ENCODE measurements at regions of chr22 and their contacts with region 1.

Region 1: GRCh38 chr22:39292561-39293098 is 26.8 kb downstream of the RPL3 start:
- DNase-seq: peak; percentile 96 to 98
- H3K4me3 ChIP-seq: peak overlapping the region in 1 of 3 donors; percentile 32
- H3K27ac ChIP-seq: peak overlapping the region; percentile 95 to 96
- H3K4me1 ChIP-seq: peaks cover 20 to 37% of the 10 kb centered on the region in 2 donors
- H3K27me3 ChIP-seq: no peaks in the 10 kb centered on the region
- CTCF ChIP-seq: peak in 1 of 3 donors; percentile 7
- POLR2A ChIP-seq: peak; percentile 34

Region 2: DNA sequence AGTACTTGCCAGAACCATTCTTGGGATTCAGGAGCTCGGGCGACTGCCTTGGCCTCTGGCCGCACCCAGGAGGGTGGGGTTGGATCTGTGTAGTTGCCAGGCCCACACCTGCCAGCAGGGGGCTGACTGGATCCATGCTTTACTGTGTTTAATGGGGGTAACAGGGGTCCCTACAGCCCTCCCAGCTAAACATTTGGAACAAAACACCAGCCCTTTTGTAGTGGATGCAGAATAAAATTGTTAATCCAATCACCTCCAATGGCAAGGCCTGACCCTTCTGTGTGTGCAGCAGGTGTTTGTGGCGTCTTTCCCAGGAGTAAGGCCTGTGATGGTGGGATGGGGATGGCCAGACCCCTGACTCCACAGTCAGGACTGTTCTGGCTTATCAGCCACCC is 559.3 kb before region 1 on chr22:
- intact Hi-C with region 1: loop called (anchors 5 kb)
- DNase-seq: no peak
- H3K4me3 ChIP-seq: no peak overlapping the region
- H3K27ac ChIP-seq: peak overlapping the region; percentile 81 to 87
- H3K4me1 ChIP-seq: peaks cover 12 to 20% of the 10 kb centered on the region in 2 donors
- H3K27me3 ChIP-seq: no peaks in the 10 kb centered on the region
- CTCF ChIP-seq: peak; percentile 53 to 68 (median 55)
- POLR2A ChIP-seq: no peak

Region 3: DNA sequence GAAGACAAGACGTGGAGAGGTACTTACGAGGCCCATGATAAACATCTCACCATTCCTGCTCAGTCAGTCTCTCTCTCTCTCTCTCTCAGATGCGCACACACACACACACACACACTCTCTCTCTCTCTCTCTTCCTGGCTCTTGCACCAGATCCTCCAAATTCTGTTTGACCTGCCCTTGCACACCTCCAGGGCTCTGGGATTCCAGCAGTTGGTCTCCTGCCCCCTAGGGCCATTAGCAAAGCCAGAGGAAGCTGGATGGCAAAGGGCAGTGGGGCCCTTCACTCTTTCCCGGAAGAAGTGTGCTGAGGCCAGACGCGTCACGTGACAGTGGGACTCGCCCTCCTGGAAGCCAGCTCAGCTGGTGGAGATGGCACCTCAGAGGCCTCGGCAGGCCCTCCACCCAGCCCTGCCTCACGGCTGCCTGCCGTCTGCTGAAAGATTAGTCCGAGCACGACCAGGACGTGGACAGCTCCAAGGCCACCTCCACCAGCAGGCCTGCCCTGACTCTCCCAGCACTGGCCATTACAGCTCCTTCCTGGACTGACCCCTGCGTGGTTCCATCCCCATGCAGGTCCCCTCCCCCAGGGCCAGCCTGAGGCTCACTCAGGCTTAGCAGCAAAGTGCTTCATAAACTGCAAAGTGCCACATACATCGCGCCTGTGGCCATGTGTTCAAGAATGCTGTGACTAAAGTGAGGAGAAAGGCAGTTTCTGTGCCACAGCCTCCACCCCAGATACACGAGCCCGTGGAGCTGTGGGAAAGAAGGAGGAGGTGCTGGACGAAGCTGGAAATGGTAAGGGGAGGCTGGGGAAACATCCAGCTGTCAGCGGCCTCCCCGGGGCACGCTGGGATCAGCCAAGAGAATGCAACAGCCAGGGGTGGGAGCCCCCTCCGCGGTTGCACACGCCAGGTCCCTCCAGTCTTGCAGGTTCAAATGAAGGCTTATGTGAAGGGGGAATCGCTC is 51.5 kb before region 1 on chr22:
- intact Hi-C with region 1: loop called (anchors 10 kb)
- DNase-seq: peak; percentile 71 to 78
- H3K4me3 ChIP-seq: peak overlapping the region; percentile 55 to 80 (median 70)
- H3K27ac ChIP-seq: peak overlapping the region; percentile 93 to 95
- H3K4me1 ChIP-seq: peaks cover 17 to 30% of the 10 kb centered on the region in 2 donors
- H3K27me3 ChIP-seq: no peaks in the 10 kb centered on the region
- CTCF ChIP-seq: peak in 1 of 3 donors; percentile 44
- POLR2A ChIP-seq: no peak